ENCODE measurements at regions of chr9 and their contacts with region 1.

Region 1: GRCh38 chr9:86413966-86414880 is 60.0 kb upstream of the TUT7 start:
- DNase-seq: peak; percentile 40
- ATAC-seq: no peak
- H3K4me3 ChIP-seq: no peak overlapping the region
- H3K27ac ChIP-seq: no peak overlapping the region
- H3K4me1 ChIP-seq: no peaks in the 10 kb centered on the region
- H3K27me3 ChIP-seq: peaks cover 12% of the 10 kb centered on the region; the same call in 1 of the 2 replicates
- CTCF ChIP-seq: peak; percentile 72

Region 2: GRCh38 chr9:86424251-86424891 is 10.1 kb after region 1 on chr9:
- CTCF ChIA-PET with region 1: no interaction called
- POLR2A ChIA-PET with region 1: no interaction called
- intact Hi-C with region 1: no loop called
- DNase-seq: no peak
- ATAC-seq: no peak
- H3K4me3 ChIP-seq: no peak overlapping the region
- H3K27ac ChIP-seq: no peak overlapping the region
- H3K4me1 ChIP-seq: no peaks in the 10 kb centered on the region
- H3K27me3 ChIP-seq: peaks cover 17% of the 10 kb centered on the region
- CTCF ChIP-seq: no peak

Region 3: DNA sequence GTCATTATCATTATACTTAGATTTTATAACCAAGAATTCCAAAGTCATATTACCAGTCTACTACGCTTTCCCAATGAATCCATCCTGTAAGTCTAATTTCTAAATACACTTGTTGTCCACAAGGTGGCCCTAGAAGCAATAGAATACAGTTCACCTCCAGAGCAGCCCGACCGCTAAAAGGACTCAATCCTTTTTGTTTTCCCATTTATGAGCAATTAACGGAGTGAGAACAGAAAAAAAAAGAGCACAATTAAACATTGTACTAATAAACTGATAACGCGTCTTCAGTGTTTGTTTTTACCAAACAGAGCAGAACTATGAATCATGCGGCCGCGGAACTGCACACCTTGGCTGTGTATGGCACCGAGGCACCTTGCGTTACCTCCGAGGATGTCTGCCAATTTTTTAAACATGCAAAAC is 922.7 kb after region 1 on chr9:
- CTCF ChIA-PET with region 1: no interaction called
- POLR2A ChIA-PET with region 1: no interaction called
- intact Hi-C with region 1: loop called (anchors 5 kb)
- DNase-seq: peak; percentile 44
- ATAC-seq: peak; percentile 57
- H3K4me3 ChIP-seq: no peak overlapping the region
- H3K27ac ChIP-seq: no peak overlapping the region
- H3K4me1 ChIP-seq: no peaks in the 10 kb centered on the region
- H3K27me3 ChIP-seq: peaks cover 20% of the 10 kb centered on the region; the same call in 1 of the 2 replicates
- CTCF ChIP-seq: peak; percentile 62